SK-N-SH (cell line): ENCODE measurements at regions of chr20 and their contacts with region 1.

Region 1: GRCh38 chr20:38748097-38748860 is at the start of gene ACTR5:
- DNase-seq: peak; percentile 98
- H3K4me3 ChIP-seq: peak within 1 kb of the TSS; percentile 89 to 90
- H3K27ac ChIP-seq: peak within 1 kb of the TSS; percentile 84 to 89
- H3K4me1 ChIP-seq: peaks cover 0 to 14% of the 10 kb centered on the region in 2 experiments; a peak in 2 of 4 replicates
- H3K27me3 ChIP-seq: no peaks in the 10 kb centered on the region
- CTCF ChIP-seq: no peak
- EP300 ChIP-seq: no peak
- RAD21 ChIP-seq: no peak
- polyA plus RNA-seq, gene ACTR5: 9.7 and 10.9 TPM in 2 replicates

Region 2: DNA sequence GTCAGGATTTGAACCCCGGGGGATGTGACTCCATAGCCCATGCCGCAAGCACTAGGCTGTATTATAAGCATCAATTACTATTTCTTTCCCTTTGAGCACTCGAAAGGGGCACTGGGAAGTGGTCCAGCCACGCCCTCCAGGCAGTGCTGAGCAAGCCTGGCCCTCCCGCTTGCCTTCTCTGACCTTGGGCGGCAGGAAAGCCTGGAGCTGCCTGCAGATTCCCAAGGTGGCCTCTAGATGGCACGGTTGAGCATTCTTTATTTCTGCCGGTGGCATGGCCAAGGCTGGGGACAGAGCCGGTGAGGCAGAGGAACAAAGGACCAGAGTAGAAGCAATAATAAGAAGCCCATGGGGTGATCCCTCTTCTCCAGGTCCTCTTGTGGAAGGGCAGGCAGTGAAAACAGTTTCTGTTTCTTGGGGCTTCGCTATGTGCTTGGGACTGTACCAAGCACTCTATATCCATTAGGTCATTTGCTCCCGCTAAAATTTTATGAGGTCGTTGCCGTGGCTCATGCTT is 114.6 kb before region 1 on chr20:
- CTCF ChIA-PET with region 1: interaction called, 321 read pairs
- POLR2A ChIA-PET with region 1: no interaction called
- DNase-seq: peak; percentile 86
- H3K4me3 ChIP-seq: no peak overlapping the region; a peak in 1 of 4 replicates
- H3K27ac ChIP-seq: no peak overlapping the region
- H3K4me1 ChIP-seq: no peaks in the 10 kb centered on the region
- H3K27me3 ChIP-seq: no peaks in the 10 kb centered on the region
- CTCF ChIP-seq: peak; percentile 78
- EP300 ChIP-seq: no peak
- RAD21 ChIP-seq: peak; percentile 67

Region 3: GRCh38 chr20:38665094-38665865 is 83.0 kb before region 1 on chr20:
- CTCF ChIA-PET with region 1: interaction called, 10 read pairs
- POLR2A ChIA-PET with region 1: no interaction called
- DNase-seq: peak; percentile 52
- H3K4me3 ChIP-seq: no peak overlapping the region
- H3K27ac ChIP-seq: no peak overlapping the region
- H3K4me1 ChIP-seq: peaks cover 0 to 20% of the 10 kb centered on the region in 2 experiments; a peak in 1 of 4 replicates
- H3K27me3 ChIP-seq: peaks cover 6% of the 10 kb centered on the region
- CTCF ChIP-seq: no peak
- EP300 ChIP-seq: no peak
- RAD21 ChIP-seq: no peak

Region 4: GRCh38 chr20:38764567-38765355 is 16.5 kb after region 1 on chr20:
- CTCF ChIA-PET with region 1: interaction called, 99 read pairs
- POLR2A ChIA-PET with region 1: no interaction called
- DNase-seq: no peak
- H3K4me3 ChIP-seq: no peak overlapping the region
- H3K27ac ChIP-seq: no peak overlapping the region
- H3K4me1 ChIP-seq: peaks cover 0 to 9% of the 10 kb centered on the region in 2 experiments; a peak in 1 of 4 replicates
- H3K27me3 ChIP-seq: no peaks in the 10 kb centered on the region
- CTCF ChIP-seq: no peak
- EP300 ChIP-seq: no peak
- RAD21 ChIP-seq: no peak

Region 5: DNA sequence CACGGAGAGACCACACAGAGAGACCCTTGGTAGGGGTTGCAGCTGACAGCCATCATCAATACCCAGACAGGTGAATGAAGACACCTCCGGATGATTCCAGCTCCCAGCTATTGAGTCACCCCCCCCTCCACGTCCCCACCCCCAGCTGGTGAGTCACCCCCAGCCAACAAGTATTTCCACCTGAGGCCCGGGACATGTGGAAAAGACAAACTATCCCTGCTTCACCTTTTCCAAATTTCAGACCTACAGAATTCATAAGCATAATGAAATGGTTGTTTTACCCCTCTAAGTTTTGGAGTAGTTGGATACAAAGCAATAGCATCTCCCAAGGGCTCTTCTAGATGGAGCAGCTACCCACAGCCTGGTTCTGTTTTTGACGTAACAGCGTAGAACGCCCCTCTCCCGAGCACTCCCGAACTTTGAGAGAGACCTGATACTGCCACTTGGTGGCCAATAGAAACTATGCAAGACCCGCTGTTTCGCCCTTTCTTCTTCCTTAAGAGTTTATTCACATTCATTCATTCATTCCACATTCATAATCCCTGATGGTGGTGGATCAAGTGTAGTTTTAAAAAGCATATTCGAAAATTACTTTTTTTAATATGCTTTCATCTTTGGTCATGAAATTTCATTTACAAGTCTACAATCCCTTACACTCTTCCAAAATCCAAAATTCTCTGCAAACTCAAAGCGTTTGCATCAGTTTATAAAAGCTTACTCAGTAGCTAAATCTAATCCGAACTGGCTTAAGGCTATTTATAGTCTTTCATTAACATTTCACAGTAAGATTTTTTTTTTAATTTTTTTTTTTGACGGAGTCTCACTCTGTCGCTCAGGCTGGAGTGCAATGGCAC is 42.1 kb after region 1 on chr20:
- CTCF ChIA-PET with region 1: interaction called, 19 read pairs
- POLR2A ChIA-PET with region 1: no interaction called
- DNase-seq: peak; percentile 51
- H3K4me3 ChIP-seq: no peak overlapping the region; a peak in 1 of 4 replicates
- H3K27ac ChIP-seq: no peak overlapping the region
- H3K4me1 ChIP-seq: 0 out of 4 replicates have a peak, but pooled peaks cover 0 to 4% of the 10 kb centered on the region in 2 experiments
- H3K27me3 ChIP-seq: peaks cover 5% of the 10 kb centered on the region; the same call in 1 of the 2 replicates
- CTCF ChIP-seq: peak; percentile 67
- EP300 ChIP-seq: no peak
- RAD21 ChIP-seq: peak; percentile 53

Region 6: GRCh38 chr20:38941726-38942389 is 193.6 kb after region 1 on chr20:
- CTCF ChIA-PET with region 1: no interaction called
- POLR2A ChIA-PET with region 1: no interaction called
- DNase-seq: no peak
- H3K4me3 ChIP-seq: no peak overlapping the region
- H3K27ac ChIP-seq: no peak overlapping the region
- H3K4me1 ChIP-seq: no peaks in the 10 kb centered on the region
- H3K27me3 ChIP-seq: no peaks in the 10 kb centered on the region
- CTCF ChIP-seq: peak; percentile 16; the same call in 1 of the 2 replicates
- EP300 ChIP-seq: no peak
- RAD21 ChIP-seq: no peak